PC-9 (cell line): ENCODE measurements at regions of chr21 and their contacts with region 1.

Region 1: DNA sequence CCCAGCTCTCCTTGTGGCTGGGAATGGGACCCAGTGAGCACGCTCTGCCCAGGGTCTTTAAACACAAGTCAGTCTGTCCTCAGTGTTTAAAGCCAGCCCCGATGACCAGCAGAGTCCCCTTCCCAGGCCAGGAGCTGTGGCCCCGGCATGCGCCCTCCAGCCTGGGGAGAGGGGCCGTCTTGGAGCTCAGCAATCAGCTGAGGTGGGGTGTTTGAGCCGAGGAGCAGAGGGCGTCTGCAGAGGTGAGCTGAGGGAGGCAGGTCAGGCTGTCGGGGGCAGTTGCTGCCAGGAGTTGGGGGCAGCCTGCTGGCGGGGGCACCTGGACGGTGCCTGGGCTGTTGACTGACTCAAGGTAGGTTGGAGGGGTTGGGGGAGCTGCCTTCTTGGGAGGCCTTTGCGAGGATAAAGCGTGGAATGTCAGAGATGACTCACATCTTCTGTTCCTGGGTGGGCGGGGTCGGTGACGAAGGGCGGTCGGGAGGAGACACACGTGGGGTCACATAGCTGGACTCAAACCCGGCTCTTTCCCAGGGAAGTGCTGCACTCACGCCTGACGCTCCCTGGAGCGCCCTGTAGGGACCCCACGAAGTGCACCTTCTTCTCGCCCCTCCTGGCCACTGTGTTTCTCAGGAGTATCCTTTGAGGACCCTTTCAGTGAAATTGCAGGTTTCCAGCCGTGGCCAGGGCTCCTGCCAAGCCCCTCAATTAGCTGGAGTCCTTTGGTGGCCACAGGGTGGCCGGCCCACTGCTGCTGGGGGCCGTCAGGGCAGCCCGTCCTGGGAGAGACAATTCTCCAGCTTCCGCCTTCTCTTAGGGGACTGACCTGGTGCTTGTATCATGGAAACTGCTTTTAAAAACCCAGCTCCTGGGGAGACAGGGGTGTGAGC is 86.2 kb downstream of the SIK1 start:
- DNase-seq: peak; percentile 64 to 76
- H3K4me3 ChIP-seq: no peak overlapping the region
- H3K27ac ChIP-seq: no peak overlapping the region
- H3K4me1 ChIP-seq: peaks cover 33% of the 10 kb centered on the region
- H3K27me3 ChIP-seq: no peaks in the 10 kb centered on the region
- CTCF ChIP-seq: no peak

Region 2: GRCh38 chr21:43275421-43276211 is 65.1 kb before region 1 on chr21:
- CTCF ChIA-PET with region 1: no interaction called
- POLR2A ChIA-PET with region 1: interaction called, 11 read pairs
- intact Hi-C with region 1: no loop called
- DNase-seq: no peak
- H3K4me3 ChIP-seq: no peak overlapping the region
- H3K27ac ChIP-seq: no peak overlapping the region
- H3K4me1 ChIP-seq: no peaks in the 10 kb centered on the region
- H3K27me3 ChIP-seq: no peaks in the 10 kb centered on the region
- CTCF ChIP-seq: no peak